Lower leg skin (tissue), 4 donors: ENCODE measurements at regions of chr17 and their contacts with region 1.

Region 1: GRCh38 chr17:48678141-48678971 is 44.0 kb downstream of the PRAC1 start:
- DNase-seq: peak; percentile 32 to 90
- H3K4me3 ChIP-seq: no peak overlapping the region
- CTCF ChIP-seq: peak in 1 of 3 donors; percentile 56
- POLR2A ChIP-seq: no peak

Region 2: DNA sequence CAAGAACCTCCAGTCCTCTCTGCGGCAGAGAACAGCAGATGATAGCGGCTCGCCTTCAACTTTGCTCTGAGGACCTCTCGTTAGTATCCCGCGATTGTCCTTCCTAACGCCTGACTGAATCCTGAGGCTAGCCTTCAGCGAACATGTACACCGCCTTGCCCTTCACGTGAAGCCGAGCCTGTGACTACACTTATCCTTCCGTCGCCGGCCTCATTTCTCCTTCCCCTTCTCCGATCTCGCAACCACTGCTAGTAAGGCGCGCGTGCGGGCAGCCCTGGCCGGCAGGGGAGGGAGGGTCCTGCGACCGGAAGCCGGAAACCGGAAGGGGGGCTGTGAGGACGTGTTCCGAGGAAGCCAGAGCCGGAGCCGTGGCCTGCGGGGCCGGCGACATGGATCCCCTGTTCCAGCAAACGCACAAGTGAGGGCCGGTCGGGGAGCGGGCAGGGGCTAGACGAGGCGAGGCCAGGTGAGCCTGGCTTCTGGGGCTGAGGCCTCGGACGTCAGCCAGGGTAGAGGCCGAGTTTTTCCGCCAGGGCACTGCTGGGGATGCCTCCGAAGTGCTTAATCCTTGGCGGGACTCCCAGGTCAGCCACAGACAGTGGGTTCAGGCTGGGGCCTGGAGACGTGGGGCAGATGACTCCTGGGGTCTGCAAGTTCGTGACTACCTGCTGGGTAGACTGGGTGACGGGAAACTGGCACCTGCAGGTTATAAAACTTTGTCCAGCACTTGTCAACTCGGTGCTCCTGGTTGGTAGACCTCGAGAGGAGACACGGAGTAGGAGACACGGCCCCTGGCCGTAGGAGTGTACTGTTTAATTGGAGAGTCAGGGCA is 1755.3 kb before region 1 on chr17 and contains the start of gene GOSR2:
- intact Hi-C with region 1: no loop called
- DNase-seq: peak; percentile 77 to 96
- H3K4me3 ChIP-seq: peak within 1 kb of the TSS; percentile 95
- CTCF ChIP-seq: peak in 1 of 3 donors; percentile 6
- POLR2A ChIP-seq: peak in 1 of 2 donors; percentile 47
- total RNA-seq, gene GOSR2: 28.5 to 37.6 (median 30.3) TPM

Region 3: GRCh38 chr17:48663134-48663924 is 15.0 kb before region 1 on chr17:
- intact Hi-C with region 1: loop called (anchors 1 kb)
- DNase-seq: peak in 1 of 2 donors; percentile 13
- H3K4me3 ChIP-seq: no peak overlapping the region
- CTCF ChIP-seq: no peak
- POLR2A ChIP-seq: no peak

Region 4: GRCh38 chr17:48787828-48788227 is 109.5 kb after region 1 on chr17:
- intact Hi-C with region 1: loop called (anchors 10 kb)
- DNase-seq: no peak
- H3K4me3 ChIP-seq: no peak overlapping the region
- CTCF ChIP-seq: no peak
- POLR2A ChIP-seq: no peak